Heart right ventricle (tissue), 16 donors: ENCODE measurements at regions of chr10 and their contacts with region 1.

Region 1: GRCh38 chr10:73848821-73849489 is 25.4 kb downstream of the CAMK2G start:
- DNase-seq: peak; percentile 88
- ATAC-seq: peak; percentile 84 to 95 (median 91)
- H3K4me3 ChIP-seq: peak overlapping the region in 4 of 10 donors; percentile 8 to 23 (median 18)
- H3K27ac ChIP-seq: peak overlapping the region; percentile 3 to 78 (median 58)
- H3K4me1 ChIP-seq: peaks cover 0 to 34% (median 22%) of the 10 kb centered on the region in 9 donors
- H3K27me3 ChIP-seq: no peaks in the 10 kb centered on the region
- CTCF ChIP-seq: peak; percentile 98 to 100 (median 100)

Region 2: DNA sequence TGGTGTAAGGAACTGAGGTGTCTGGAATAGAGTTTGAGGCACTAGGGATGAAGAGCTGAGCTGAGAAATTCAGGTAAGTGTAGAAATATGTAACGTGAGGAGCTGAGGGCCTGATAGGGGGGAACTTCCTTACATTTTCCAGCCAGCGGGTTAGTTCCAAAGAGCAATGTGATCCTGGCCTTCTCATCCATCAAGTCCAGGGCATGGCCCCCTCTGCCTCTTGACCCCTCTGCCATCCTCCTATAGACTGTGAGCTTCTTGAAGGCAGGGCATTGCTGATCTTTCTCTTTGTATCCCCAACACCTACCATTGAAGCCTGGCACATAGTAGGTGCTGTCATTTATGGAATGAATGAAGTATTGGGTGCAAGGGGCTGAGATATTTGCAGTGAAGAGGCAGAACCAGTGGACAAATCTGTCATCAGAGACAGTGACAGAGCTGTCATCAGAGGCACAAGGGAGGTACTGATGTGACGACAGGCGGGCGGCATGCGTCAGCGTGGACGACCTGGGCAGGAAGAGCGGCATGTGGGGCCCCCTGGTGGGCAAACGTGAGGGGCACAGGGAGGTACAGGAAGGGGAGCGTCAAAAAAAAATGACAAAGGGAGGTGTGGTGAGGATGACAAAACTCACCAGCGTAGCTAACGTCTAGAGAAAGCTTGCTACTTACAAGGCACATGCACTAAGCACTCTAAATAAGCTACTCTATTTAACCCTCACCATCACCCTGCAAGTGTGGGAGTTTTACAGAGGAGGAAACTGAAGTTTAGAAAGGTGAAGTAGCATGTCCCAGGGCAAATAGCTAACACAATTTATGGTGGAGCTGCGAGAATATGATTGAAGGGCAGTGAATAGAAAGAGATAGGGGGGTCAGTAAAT is 30.6 kb after region 1 on chr10:
- intact Hi-C with region 1: loop called (anchors 1 to 5 kb)
- DNase-seq: peak; percentile 85 to 90
- ATAC-seq: peak; percentile 89 to 96 (median 94)
- H3K4me3 ChIP-seq: no peak overlapping the region
- H3K27ac ChIP-seq: no peak overlapping the region
- H3K4me1 ChIP-seq: peaks cover 0 to 36% (median 20%) of the 10 kb centered on the region in 9 donors
- H3K27me3 ChIP-seq: no peaks in the 10 kb centered on the region
- CTCF ChIP-seq: peak; percentile 83 to 96 (median 93)